ENCODE measurements at regions of chr1 and their contacts with region 1.

Region 1: GRCh38 chr1:47179017-47179987 is 10.5 kb downstream of the PDZK1IP1 start:
- DNase-seq: peak; percentile 94
- ATAC-seq: peak; percentile 81
- H3K4me3 Mint-ChIP-seq: peak overlapping the region; percentile 79
- H3K27ac Mint-ChIP-seq: peak overlapping the region; percentile 76
- H3K4me1 Mint-ChIP-seq: peaks cover 22% of the 10 kb centered on the region
- H3K27me3 Mint-ChIP-seq: peaks cover 36% of the 10 kb centered on the region
- CTCF ChIP-seq: peak; percentile 62

Region 2: GRCh38 chr1:47067097-47067594 is 112.2 kb before region 1 on chr1 and contains the start of gene CYP4Z1:
- CTCF ChIA-PET with region 1: no interaction called
- POLR2A ChIA-PET with region 1: no interaction called
- DNase-seq: no peak
- ATAC-seq: no peak
- H3K4me3 Mint-ChIP-seq: no peak within 1 kb of the TSS
- H3K27ac Mint-ChIP-seq: no peak within 1 kb of the TSS
- H3K4me1 Mint-ChIP-seq: no peaks in the 10 kb centered on the region
- H3K27me3 Mint-ChIP-seq: peaks cover 34% of the 10 kb centered on the region
- CTCF ChIP-seq: no peak
- total RNA-seq, gene CYP4Z1: not detected in 3 replicates

Region 3: GRCh38 chr1:47211796-47212269 is 32.5 kb after region 1 on chr1:
- CTCF ChIA-PET with region 1: interaction called, 11 read pairs
- POLR2A ChIA-PET with region 1: no interaction called
- DNase-seq: no peak
- ATAC-seq: peak; percentile 7
- H3K4me3 Mint-ChIP-seq: no peak overlapping the region
- H3K27ac Mint-ChIP-seq: no peak overlapping the region
- H3K4me1 Mint-ChIP-seq: peaks cover 36% of the 10 kb centered on the region
- H3K27me3 Mint-ChIP-seq: peaks cover 49% of the 10 kb centered on the region
- CTCF ChIP-seq: no peak

Region 4: DNA sequence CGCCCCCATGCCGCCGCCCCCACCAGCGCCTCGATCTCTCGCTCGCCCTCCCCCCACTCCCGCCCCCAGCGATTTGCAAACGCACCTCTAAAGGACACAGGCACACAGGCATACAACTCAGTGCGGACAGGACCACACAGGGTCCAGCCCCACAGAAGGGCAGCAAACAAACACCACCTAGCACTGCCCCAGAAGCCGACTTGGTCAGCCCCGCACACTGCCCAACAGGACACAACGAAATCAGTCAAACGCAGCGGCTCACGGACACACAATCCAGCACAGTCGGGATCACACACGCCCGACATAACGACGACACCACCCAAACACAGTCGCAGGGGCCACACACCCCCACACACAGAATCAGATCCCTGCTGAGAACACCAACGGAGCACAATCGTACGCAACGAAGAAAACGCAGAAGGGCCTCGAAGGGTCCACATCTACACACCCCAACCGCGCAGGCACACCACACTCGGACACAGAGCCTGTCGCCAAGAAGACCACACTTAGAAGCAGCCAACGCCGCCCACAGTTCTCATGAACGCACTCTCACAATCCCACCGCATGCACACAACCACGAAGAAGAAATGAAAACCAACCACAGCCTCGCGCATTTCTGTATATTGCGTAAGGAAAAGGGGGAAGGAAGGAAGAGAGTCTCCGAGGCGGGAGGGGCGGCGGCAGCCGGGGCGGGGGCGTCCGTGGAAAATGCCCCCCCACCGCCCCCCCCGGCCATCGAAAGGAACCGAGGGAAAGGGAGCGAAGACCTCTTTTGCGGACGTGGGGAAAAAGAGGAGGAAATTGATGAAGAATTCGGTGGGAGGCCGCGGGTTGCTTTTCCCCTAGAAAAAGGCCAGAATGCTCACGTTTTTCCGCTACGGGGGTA is 52.2 kb after region 1 on chr1:
- CTCF ChIA-PET with region 1: interaction called, 18 read pairs
- POLR2A ChIA-PET with region 1: no interaction called
- DNase-seq: no peak
- ATAC-seq: peak; percentile 2
- H3K4me3 Mint-ChIP-seq: peak overlapping the region; percentile 69
- H3K27ac Mint-ChIP-seq: no peak overlapping the region
- H3K4me1 Mint-ChIP-seq: peaks cover 65% of the 10 kb centered on the region
- H3K27me3 Mint-ChIP-seq: peaks cover 100% of the 10 kb centered on the region
- CTCF ChIP-seq: no peak

Region 5: GRCh38 chr1:47262787-47263413 is 83.6 kb after region 1 on chr1:
- CTCF ChIA-PET with region 1: interaction called, 70 read pairs
- POLR2A ChIA-PET with region 1: no interaction called
- DNase-seq: peak; percentile 60
- ATAC-seq: peak; percentile 67
- H3K4me3 Mint-ChIP-seq: no peak overlapping the region
- H3K27ac Mint-ChIP-seq: no peak overlapping the region
- H3K4me1 Mint-ChIP-seq: no peaks in the 10 kb centered on the region
- H3K27me3 Mint-ChIP-seq: no peaks in the 10 kb centered on the region
- CTCF ChIP-seq: peak; percentile 60

Region 6: GRCh38 chr1:47298025-47298699 is 118.9 kb after region 1 on chr1:
- CTCF ChIA-PET with region 1: no interaction called
- POLR2A ChIA-PET with region 1: no interaction called
- DNase-seq: no peak
- ATAC-seq: no peak
- H3K4me3 Mint-ChIP-seq: no peak overlapping the region
- H3K27ac Mint-ChIP-seq: no peak overlapping the region
- H3K4me1 Mint-ChIP-seq: no peaks in the 10 kb centered on the region
- H3K27me3 Mint-ChIP-seq: no peaks in the 10 kb centered on the region
- CTCF ChIP-seq: no peak

Region 7: GRCh38 chr1:47351305-47351704 is 172.0 kb after region 1 on chr1:
- CTCF ChIA-PET with region 1: no interaction called
- POLR2A ChIA-PET with region 1: no interaction called
- DNase-seq: no peak
- ATAC-seq: no peak
- H3K4me3 Mint-ChIP-seq: no peak overlapping the region
- H3K27ac Mint-ChIP-seq: peak overlapping the region; percentile 55; the same call in 1 of the 2 replicates
- H3K4me1 Mint-ChIP-seq: no peaks in the 10 kb centered on the region
- H3K27me3 Mint-ChIP-seq: no peaks in the 10 kb centered on the region
- CTCF ChIP-seq: no peak

Region 8: DNA sequence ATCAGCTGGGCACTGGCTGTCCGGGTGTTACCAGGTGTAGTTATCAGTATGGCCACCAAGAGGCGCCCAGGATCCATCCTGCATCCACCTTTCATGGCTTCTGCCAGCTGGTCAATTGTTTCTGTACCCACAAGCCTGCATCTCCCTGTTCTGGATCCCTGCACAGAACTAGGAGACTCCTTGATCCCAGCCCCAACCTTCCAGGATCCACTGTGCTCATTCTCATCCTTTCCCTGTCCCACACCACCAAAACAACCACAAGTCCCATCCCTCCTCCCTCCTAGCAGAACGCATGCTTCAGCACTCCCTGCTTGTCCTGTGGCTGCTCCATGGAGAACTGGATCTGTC is 209.6 kb after region 1 on chr1:
- CTCF ChIA-PET with region 1: interaction called, 13 read pairs
- POLR2A ChIA-PET with region 1: no interaction called
- DNase-seq: peak; percentile 79
- ATAC-seq: peak; percentile 96
- H3K4me3 Mint-ChIP-seq: no peak overlapping the region
- H3K27ac Mint-ChIP-seq: no peak overlapping the region
- H3K4me1 Mint-ChIP-seq: no peaks in the 10 kb centered on the region
- H3K27me3 Mint-ChIP-seq: peaks cover 25% of the 10 kb centered on the region
- CTCF ChIP-seq: peak; percentile 77

Region 9: DNA sequence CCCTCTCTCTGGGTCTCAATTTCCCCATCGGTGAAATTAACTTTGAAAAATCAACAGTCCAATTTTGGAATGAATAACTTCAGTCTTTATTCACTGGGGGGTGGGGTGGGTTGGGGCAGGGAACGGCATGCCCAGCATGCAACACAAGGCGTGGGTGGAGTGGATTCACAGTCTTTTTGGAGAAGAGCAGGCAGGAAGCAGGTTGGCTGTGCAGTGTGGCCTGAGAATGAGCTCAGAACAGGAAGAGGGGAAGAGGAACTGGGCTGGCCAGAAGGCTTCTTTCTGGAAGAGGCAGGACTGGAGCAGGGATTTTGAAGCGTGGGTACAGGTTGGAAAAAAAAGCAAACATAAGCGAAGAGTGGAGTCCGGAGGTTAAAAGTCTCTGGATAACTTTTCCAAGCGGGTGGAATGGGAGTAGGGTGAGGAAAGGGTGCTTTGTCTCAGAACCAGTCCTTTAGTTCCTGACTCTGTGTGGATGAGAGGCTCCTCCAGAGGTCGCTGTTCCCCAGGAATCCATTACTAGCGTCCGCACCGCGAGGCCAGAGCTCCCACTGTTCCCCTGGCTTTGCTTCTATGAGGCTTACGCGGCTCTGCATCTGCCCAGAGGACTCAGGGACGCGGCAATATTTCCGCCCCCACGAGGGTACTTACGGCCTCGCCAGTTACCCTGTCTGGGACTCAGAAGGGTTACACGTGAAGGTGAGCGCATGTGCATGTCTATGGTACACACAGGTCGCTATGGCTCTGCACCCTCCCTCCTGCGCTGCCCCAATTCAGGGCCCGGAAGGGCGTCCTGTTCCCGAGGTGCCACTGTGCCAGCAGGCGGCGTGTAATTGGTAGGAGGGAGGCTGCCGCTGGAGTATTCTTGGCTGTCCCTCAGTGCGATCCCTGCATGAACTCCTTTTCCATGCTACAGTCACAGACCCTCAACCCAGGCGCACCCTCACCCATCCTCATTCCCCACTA is 253.1 kb after region 1 on chr1:
- CTCF ChIA-PET with region 1: interaction called, 21 read pairs
- POLR2A ChIA-PET with region 1: no interaction called
- DNase-seq: peak; percentile 90
- ATAC-seq: peak; percentile 70
- H3K4me3 Mint-ChIP-seq: peak overlapping the region; percentile 62
- H3K27ac Mint-ChIP-seq: no peak overlapping the region
- H3K4me1 Mint-ChIP-seq: peaks cover 45% of the 10 kb centered on the region
- H3K27me3 Mint-ChIP-seq: peaks cover 97% of the 10 kb centered on the region
- CTCF ChIP-seq: peak; percentile 73

Region 10: GRCh38 chr1:47459253-47459788 is 280.0 kb after region 1 on chr1:
- CTCF ChIA-PET with region 1: no interaction called
- POLR2A ChIA-PET with region 1: no interaction called
- DNase-seq: no peak
- ATAC-seq: peak; percentile 71
- H3K4me3 Mint-ChIP-seq: no peak overlapping the region
- H3K27ac Mint-ChIP-seq: no peak overlapping the region
- H3K4me1 Mint-ChIP-seq: peaks cover 31% of the 10 kb centered on the region
- H3K27me3 Mint-ChIP-seq: peaks cover 47% of the 10 kb centered on the region
- CTCF ChIP-seq: no peak